Activated T-helper 2 cell treated with anti-CD3 and anti-CD28 coated beads, Interferon-gamma antibody, Interleukin-2, Interleukin-4, amounts not matched to agents 10 μg/mL and 5 μg/mL and 100 μg/mL, durations not matched to agents 14 hours and 24 hours and 36 hours (primary cell): ENCODE measurements at regions of chr18 and their contacts with region 1.

Region 1: GRCh38 chr18:13216092-13216582 is 2.4 kb upstream of the LDLRAD4 start:
- DNase-seq: peak; percentile 42
- H3K4me3 Mint-ChIP-seq: peak overlapping the region; percentile 85
- H3K27ac Mint-ChIP-seq: peak overlapping the region; percentile 83
- H3K4me1 Mint-ChIP-seq: peaks cover 26% of the 10 kb centered on the region
- H3K27me3 Mint-ChIP-seq: peaks cover 34% of the 10 kb centered on the region

Region 2: GRCh38 chr18:12929477-12930083 is 286.6 kb before region 1 on chr18:
- intact Hi-C with region 1: no loop called
- DNase-seq: no peak
- H3K4me3 Mint-ChIP-seq: no peak overlapping the region
- H3K27ac Mint-ChIP-seq: no peak overlapping the region
- H3K4me1 Mint-ChIP-seq: peaks cover 1% of the 10 kb centered on the region
- H3K27me3 Mint-ChIP-seq: peaks cover 12% of the 10 kb centered on the region

Region 3: DNA sequence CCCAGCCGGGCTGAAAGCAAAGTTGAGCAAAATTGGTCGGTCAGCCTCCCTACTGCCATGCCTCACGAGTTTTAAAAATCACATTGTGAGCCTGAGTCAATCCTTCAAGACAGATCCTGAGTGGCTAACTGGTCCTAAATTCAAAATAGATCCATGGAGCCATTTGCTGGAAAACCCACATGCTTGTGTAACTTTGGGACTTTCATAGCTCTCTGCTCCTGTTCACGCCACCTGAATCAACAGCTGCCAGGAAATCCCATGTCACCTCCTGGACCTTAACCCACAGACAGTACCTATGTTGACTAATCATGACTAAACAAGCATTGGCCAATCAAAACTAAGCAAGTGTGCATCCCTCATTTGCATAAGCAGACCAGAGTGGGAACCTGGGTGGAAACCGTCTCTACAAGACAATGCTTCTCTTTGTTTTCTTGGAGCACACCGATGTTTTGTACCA is 40.4 kb before region 1 on chr18:
- intact Hi-C with region 1: loop called (anchors 2 kb)
- DNase-seq: no peak
- H3K4me3 Mint-ChIP-seq: no peak overlapping the region
- H3K27ac Mint-ChIP-seq: no peak overlapping the region
- H3K4me1 Mint-ChIP-seq: peaks cover 32% of the 10 kb centered on the region
- H3K27me3 Mint-ChIP-seq: peaks cover 8% of the 10 kb centered on the region

Region 4: GRCh38 chr18:13271302-13271911 is 55.3 kb after region 1 on chr18:
- intact Hi-C with region 1: no loop called
- DNase-seq: no peak
- H3K4me3 Mint-ChIP-seq: no peak overlapping the region
- H3K27ac Mint-ChIP-seq: no peak overlapping the region
- H3K4me1 Mint-ChIP-seq: peaks cover 67% of the 10 kb centered on the region
- H3K27me3 Mint-ChIP-seq: no peaks in the 10 kb centered on the region

Region 5: GRCh38 chr18:13318731-13319501 is 102.8 kb after region 1 on chr18:
- intact Hi-C with region 1: loop called (anchors 2 kb)
- DNase-seq: no peak
- H3K4me3 Mint-ChIP-seq: no peak overlapping the region
- H3K27ac Mint-ChIP-seq: peak overlapping the region; percentile 36
- H3K4me1 Mint-ChIP-seq: peaks cover 21% of the 10 kb centered on the region
- H3K27me3 Mint-ChIP-seq: no peaks in the 10 kb centered on the region

Region 6: GRCh38 chr18:13500227-13500865 is 284.2 kb after region 1 on chr18:
- intact Hi-C with region 1: loop called (anchors 5 kb)
- DNase-seq: no peak
- H3K4me3 Mint-ChIP-seq: no peak overlapping the region
- H3K27ac Mint-ChIP-seq: no peak overlapping the region
- H3K4me1 Mint-ChIP-seq: peaks cover 16% of the 10 kb centered on the region
- H3K27me3 Mint-ChIP-seq: no peaks in the 10 kb centered on the region

Region 7: GRCh38 chr18:13611601-13612195 is 395.6 kb after region 1 on chr18:
- intact Hi-C with region 1: loop called (anchors 2 kb)
- DNase-seq: no peak
- H3K4me3 Mint-ChIP-seq: peak overlapping the region; percentile 78
- H3K27ac Mint-ChIP-seq: peak overlapping the region; percentile 90
- H3K4me1 Mint-ChIP-seq: peaks cover 82% of the 10 kb centered on the region
- H3K27me3 Mint-ChIP-seq: no peaks in the 10 kb centered on the region